ENCODE measurements at regions of chr9 and their contacts with region 1.

Region 1: DNA sequence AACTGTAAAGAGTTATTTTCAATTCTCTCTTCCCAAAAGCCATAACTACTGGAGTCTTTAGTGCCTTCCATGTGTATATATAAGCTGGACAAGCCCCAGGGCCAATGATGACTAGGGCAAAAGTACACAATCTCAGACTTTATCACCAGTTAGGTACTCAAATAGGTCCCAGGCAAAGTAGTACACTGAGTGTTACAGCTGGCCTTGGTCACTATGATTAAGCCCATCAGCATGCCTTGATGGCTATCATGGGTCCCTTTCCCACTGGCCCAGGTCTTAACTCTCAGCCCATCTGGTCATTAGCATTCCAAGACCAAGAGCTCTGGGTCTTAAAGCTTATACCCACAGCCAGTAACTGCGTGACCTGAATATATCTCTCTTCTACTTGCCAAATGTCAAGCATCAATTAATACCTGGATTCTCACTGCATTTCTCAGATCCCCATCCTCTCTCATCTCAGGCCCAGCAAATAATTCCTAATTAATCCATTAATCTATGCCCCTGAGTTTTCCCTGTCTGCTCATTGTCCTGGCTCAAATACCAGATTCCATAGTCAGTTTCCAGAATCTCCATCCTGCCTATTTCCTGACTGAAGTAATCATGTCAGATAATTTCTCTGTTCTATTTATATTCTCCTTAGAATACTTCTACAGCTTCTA is 62.3 kb downstream of the NR6A1 start:
- DNase-seq: no peak
- H3K4me3 ChIP-seq: no peak overlapping the region
- H3K27ac ChIP-seq: no peak overlapping the region
- H3K4me1 ChIP-seq: peaks cover 0 to 23% (median 9%) of the 10 kb centered on the region in 4 donors
- H3K27me3 ChIP-seq: no peaks in the 10 kb centered on the region
- CTCF ChIP-seq: no peak
- EP300 ChIP-seq: no peak
- POLR2A ChIP-seq: no peak

Region 2: GRCh38 chr9:124617471-124618141 is 91.2 kb before region 1 on chr9:
- intact Hi-C with region 1: loop called (anchors 1 kb)
- DNase-seq: peak; percentile 94
- H3K4me3 ChIP-seq: no peak overlapping the region
- H3K27ac ChIP-seq: no peak overlapping the region
- H3K4me1 ChIP-seq: no peaks in the 10 kb centered on the region
- H3K27me3 ChIP-seq: no peaks in the 10 kb centered on the region
- CTCF ChIP-seq: peak; percentile 88 to 93 (median 92)
- EP300 ChIP-seq: no peak
- POLR2A ChIP-seq: no peak

Region 3: GRCh38 chr9:124660341-124660801 is 48.4 kb before region 1 on chr9:
- intact Hi-C with region 1: loop called (anchors 5 kb)
- DNase-seq: no peak
- H3K4me3 ChIP-seq: peak overlapping the region; percentile 59 to 66 (median 61)
- H3K27ac ChIP-seq: peak overlapping the region in 2 of 4 donors; percentile 16 to 50
- H3K4me1 ChIP-seq: peaks cover 6 to 25% (median 20%) of the 10 kb centered on the region in 4 donors
- H3K27me3 ChIP-seq: no peaks in the 10 kb centered on the region
- CTCF ChIP-seq: no peak
- EP300 ChIP-seq: no peak
- POLR2A ChIP-seq: no peak